Right lobe of liver (tissue), 6 donors: ENCODE measurements at regions of chr5 and their contacts with region 1.

Region 1: GRCh38 chr5:149567226-149567625 is 14.1 kb upstream of the ARHGEF37 start:
- DNase-seq: no peak
- ATAC-seq: no peak
- H3K4me3 ChIP-seq: no peak overlapping the region
- H3K27ac ChIP-seq: no peak overlapping the region
- H3K4me1 ChIP-seq: peaks cover 0 to 6% (median 0%) of the 10 kb centered on the region in 4 donors
- H3K27me3 ChIP-seq: no peaks in the 10 kb centered on the region
- CTCF ChIP-seq: no peak
- POLR2A ChIP-seq: no peak

Region 2: GRCh38 chr5:149381987-149382340 is 185.3 kb before region 1 on chr5:
- intact Hi-C with region 1: loop called in 1 of 2 experiments (anchors 5 kb)
- DNase-seq: peak; percentile 70 to 73 (median 71)
- ATAC-seq: peak; percentile 79 to 90 (median 86)
- H3K4me3 ChIP-seq: no peak overlapping the region
- H3K27ac ChIP-seq: peak overlapping the region in 1 of 3 donors; percentile 3
- H3K4me1 ChIP-seq: no peaks in the 10 kb centered on the region
- H3K27me3 ChIP-seq: no peaks in the 10 kb centered on the region
- CTCF ChIP-seq: peak; percentile 79 to 89 (median 84)
- POLR2A ChIP-seq: no peak

Region 3: GRCh38 chr5:149442563-149443182 is 124.6 kb before region 1 on chr5:
- intact Hi-C with region 1: loop called (anchors 5 kb)
- DNase-seq: peak; percentile 81 to 83 (median 82)
- ATAC-seq: peak; percentile 93 to 99 (median 96)
- H3K4me3 ChIP-seq: no peak overlapping the region
- H3K27ac ChIP-seq: no peak overlapping the region
- H3K4me1 ChIP-seq: peaks cover 0 to 4% (median 0%) of the 10 kb centered on the region in 4 donors
- H3K27me3 ChIP-seq: no peaks in the 10 kb centered on the region
- CTCF ChIP-seq: peak; percentile 88 to 94 (median 91)
- POLR2A ChIP-seq: no peak